Naive thymus-derived CD4-positive, alpha-beta T cell (primary cell): ENCODE measurements at regions of chr1 and their contacts with region 1.

Region 1: DNA sequence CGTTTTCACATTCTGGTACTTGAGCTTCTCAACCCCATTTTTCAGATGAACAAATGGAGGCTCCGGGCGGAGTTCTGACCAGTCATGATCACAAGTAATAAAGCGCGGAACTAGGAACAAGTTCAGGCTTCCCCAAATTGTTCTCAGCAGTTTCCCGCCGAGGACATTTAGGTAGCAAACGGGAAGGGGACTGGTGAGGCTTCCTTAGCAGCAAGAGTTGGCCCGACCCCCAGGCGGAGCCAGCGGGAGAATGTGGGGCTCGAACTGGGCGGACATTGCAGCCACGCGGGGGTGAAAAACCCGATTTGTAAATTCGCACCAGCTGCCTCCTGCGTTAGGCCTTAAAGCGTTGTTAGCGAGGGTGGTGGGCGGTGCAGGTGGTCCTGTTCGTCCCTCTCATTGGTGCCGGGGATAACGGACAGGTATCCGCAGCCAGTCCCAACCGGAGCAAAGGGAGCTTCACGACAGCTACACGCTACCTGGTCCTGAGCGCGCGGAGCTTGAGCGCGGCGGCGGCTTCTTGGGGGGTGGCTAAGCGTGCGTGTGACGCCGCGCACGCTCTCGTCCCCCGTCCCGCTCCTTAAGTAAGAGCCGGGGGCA is 15.3 kb downstream of the SEMA6C start:
- DNase-seq: peak; percentile 37 to 92 (median 86)
- ATAC-seq: peak; percentile 99
- H3K4me3 ChIP-seq: peak overlapping the region; percentile 49
- H3K4me3 Mint-ChIP-seq: peak overlapping the region; percentile 70 to 88 (median 83)
- H3K27ac ChIP-seq: peak overlapping the region; percentile 58
- H3K27ac Mint-ChIP-seq: peak overlapping the region; percentile 13 to 94 (median 84)
- H3K4me1 ChIP-seq: peaks cover 0 to 4% of the 10 kb centered on the region in 2 donors
- H3K4me1 Mint-ChIP-seq: peaks cover 4 to 15% (median 11%) of the 10 kb centered on the region in 7 donors
- H3K27me3 ChIP-seq: no peaks in the 10 kb centered on the region
- H3K27me3 Mint-ChIP-seq: peaks cover 0 to 12% (median 0%) of the 10 kb centered on the region in 5 donors

Region 2: DNA sequence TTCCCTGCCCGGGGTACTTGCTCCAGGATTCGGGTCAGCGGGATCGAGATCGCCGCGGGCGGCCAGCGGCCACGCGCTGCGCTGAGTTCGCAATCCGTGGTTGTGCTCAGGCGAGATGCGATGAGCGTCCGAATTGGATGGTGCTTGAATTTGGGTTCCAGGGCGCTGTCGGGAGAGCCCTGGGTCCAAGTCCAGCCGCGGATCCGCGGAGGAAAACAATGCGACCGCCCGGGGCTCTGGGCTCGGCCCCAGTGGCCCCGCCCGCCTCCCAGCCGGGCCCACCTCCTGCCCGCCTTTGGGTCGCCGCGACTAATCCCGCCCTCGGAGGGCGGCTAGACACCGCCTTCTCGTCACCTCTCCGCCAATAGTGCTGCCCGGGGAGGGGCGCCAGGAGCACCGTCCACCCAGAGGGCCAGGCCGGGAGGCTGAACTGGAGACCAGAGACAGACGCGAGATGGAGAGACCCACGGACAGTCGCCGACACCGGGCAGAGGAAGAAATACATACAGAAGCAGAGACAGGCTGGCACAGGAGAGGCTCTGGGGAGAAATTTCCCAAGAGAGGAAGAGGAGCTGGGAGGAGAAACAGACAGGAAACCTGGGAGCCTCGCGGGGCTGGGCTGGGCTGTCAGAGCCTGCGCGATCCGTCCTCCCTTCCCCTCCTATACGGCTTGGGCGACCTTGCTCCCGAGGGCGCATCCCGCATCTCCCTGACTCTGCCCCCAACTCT is 15.5 kb after region 1 on chr1 and contains the start of gene SEMA6C:
- CTCF ChIA-PET with region 1: interaction called, 4 read pairs
- POLR2A ChIA-PET with region 1: interaction called, 12 read pairs
- intact Hi-C with region 1: loop called in 1 of 2 experiments (anchors 1 kb)
- DNase-seq: peak; percentile 70 to 92 (median 78)
- ATAC-seq: peak; percentile 100
- H3K4me3 ChIP-seq: peak within 1 kb of the TSS; percentile 66
- H3K4me3 Mint-ChIP-seq: peak within 1 kb of the TSS; percentile 91 to 99 (median 98)
- H3K27ac ChIP-seq: peak within 1 kb of the TSS; percentile 67
- H3K27ac Mint-ChIP-seq: peak within 1 kb of the TSS; percentile 66 to 94 (median 87)
- H3K4me1 ChIP-seq: no peaks in the 10 kb centered on the region
- H3K4me1 Mint-ChIP-seq: peaks cover 12 to 24% (median 22%) of the 10 kb centered on the region in 7 donors
- H3K27me3 ChIP-seq: no peaks in the 10 kb centered on the region
- H3K27me3 Mint-ChIP-seq: peaks cover 0 to 23% (median 0%) of the 10 kb centered on the region in 5 donors
- total RNA-seq, gene SEMA6C: 2.5 to 12.4 (median 4.7) TPM

Region 3: DNA sequence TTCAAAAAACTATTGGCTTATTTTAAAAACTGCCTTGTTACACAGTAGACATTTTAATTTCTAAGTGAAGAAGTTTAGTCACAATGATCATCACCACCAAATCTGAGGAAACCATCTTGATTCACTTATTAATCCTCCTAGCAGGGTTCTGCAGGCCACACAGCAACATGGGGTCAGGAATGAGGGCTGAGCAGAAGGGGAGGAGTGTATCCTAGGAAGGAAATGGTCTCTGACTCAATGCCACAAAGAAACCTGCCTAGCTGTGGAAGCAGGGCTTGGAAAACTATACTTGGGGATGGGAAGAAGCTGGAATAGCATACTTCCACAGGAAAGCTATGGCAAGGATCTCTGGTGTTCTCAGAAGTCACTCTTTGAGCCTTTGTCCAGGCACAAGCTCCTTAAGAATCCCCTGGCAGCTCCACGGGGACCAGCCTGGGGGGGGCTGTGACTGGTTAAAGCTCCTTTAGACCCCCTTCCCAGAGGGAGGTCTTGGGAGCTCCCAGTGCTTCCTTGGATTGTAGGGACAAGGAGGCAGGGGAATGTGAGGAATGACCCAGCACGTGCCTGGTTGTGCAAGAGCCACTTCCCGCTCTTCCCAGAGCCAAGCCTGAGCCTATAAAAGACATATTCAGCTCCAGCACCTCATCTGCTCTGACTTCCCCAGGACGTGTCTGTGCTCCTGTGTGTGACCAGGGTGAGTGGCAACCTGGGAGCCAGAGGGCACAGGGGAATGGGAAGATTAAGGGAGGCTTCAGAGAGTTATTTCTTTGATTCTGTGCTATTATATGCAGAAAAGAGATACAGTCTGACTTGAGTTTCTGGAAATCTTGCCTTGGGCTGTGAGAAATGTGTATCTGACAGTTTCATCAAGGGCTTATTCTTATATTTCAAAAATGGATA is 1566.9 kb after region 1 on chr1 and contains the start of gene LCE2A:
- CTCF ChIA-PET with region 1: no interaction called
- POLR2A ChIA-PET with region 1: no interaction called
- intact Hi-C with region 1: no loop called
- DNase-seq: no peak
- ATAC-seq: no peak
- H3K4me3 ChIP-seq: no peak within 1 kb of the TSS
- H3K4me3 Mint-ChIP-seq: no peak within 1 kb of the TSS
- H3K27ac ChIP-seq: no peak within 1 kb of the TSS
- H3K27ac Mint-ChIP-seq: no peak within 1 kb of the TSS
- H3K4me1 ChIP-seq: no peaks in the 10 kb centered on the region
- H3K4me1 Mint-ChIP-seq: no peaks in the 10 kb centered on the region
- H3K27me3 ChIP-seq: no peaks in the 10 kb centered on the region
- H3K27me3 Mint-ChIP-seq: peaks cover 1 to 17% (median 6%) of the 10 kb centered on the region in 5 donors
- total RNA-seq, gene LCE2A: not detected